PC-9 (cell line): ENCODE measurements at regions of chr3 and their contacts with region 1.

Region 1: DNA sequence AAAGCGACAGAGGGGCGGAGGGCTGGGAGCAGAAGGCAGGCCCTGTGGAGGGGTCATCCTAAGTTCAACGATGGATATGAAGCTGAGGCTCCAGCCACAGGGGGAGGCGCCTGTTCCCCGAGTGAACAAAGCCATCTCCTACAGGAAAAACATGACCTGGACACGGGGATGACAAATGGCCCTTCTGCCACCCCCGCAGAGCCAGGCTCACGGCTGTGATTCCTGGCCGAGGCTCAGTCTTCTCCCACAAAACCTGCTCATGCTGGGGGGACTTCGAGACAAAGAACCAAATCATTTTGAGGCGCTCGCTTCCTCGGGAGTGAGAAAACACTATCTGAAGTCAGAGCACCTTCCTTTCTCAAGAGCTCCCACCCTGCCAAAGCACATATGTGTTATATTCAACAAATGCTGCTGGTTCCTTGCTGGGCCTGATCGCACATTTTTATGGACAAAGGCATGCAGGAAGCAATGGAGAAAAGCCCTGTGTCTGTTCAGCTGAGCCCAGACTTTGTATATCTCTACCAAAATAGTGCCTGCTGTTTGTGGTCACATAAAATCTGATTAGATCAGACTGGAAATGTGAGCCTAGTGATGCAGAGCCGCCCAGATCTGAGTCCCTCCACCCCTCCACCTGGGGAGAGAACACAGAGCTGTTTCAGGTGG is 5.6 kb downstream of the RBP1 start:
- DNase-seq: peak; percentile 67 to 87
- H3K4me3 ChIP-seq: peak overlapping the region; percentile 30; the same call in 1 of the 2 replicates
- H3K27ac ChIP-seq: peak overlapping the region; percentile 94
- H3K4me1 ChIP-seq: peaks cover 64% of the 10 kb centered on the region
- H3K27me3 ChIP-seq: no peaks in the 10 kb centered on the region
- CTCF ChIP-seq: no peak

Region 2: GRCh38 chr3:139302084-139302800 is 231.7 kb before region 1 on chr3:
- CTCF ChIA-PET with region 1: no interaction called
- POLR2A ChIA-PET with region 1: no interaction called
- intact Hi-C with region 1: loop called (anchors 2 kb)
- DNase-seq: peak; percentile 91 to 97
- H3K4me3 ChIP-seq: peak overlapping the region; percentile 22; the same call in 1 of the 2 replicates
- H3K27ac ChIP-seq: peak overlapping the region; percentile 71
- H3K4me1 ChIP-seq: peaks cover 52% of the 10 kb centered on the region
- H3K27me3 ChIP-seq: no peaks in the 10 kb centered on the region
- CTCF ChIP-seq: no peak

Region 3: GRCh38 chr3:139473155-139473771 is 60.6 kb before region 1 on chr3:
- CTCF ChIA-PET with region 1: no interaction called
- POLR2A ChIA-PET with region 1: no interaction called
- intact Hi-C with region 1: loop called (anchors 10 kb)
- DNase-seq: peak; percentile 43 to 87
- H3K4me3 ChIP-seq: no peak overlapping the region
- H3K27ac ChIP-seq: peak overlapping the region; percentile 85
- H3K4me1 ChIP-seq: peaks cover 43% of the 10 kb centered on the region
- H3K27me3 ChIP-seq: no peaks in the 10 kb centered on the region
- CTCF ChIP-seq: no peak

Region 4: GRCh38 chr3:139574026-139574947 is 40.4 kb after region 1 on chr3:
- CTCF ChIA-PET with region 1: no interaction called
- POLR2A ChIA-PET with region 1: no interaction called
- intact Hi-C with region 1: no loop called
- DNase-seq: no peak
- H3K4me3 ChIP-seq: no peak overlapping the region
- H3K27ac ChIP-seq: no peak overlapping the region
- H3K4me1 ChIP-seq: no peaks in the 10 kb centered on the region
- H3K27me3 ChIP-seq: no peaks in the 10 kb centered on the region
- CTCF ChIP-seq: no peak

Region 5: GRCh38 chr3:139601191-139601961 is 67.5 kb after region 1 on chr3:
- CTCF ChIA-PET with region 1: no interaction called
- POLR2A ChIA-PET with region 1: no interaction called
- intact Hi-C with region 1: no loop called
- DNase-seq: peak in 1 of 2 experiments; percentile 70
- H3K4me3 ChIP-seq: no peak overlapping the region
- H3K27ac ChIP-seq: peak overlapping the region; percentile 42
- H3K4me1 ChIP-seq: peaks cover 26% of the 10 kb centered on the region
- H3K27me3 ChIP-seq: no peaks in the 10 kb centered on the region
- CTCF ChIP-seq: no peak

Region 6: GRCh38 chr3:140629357-140630139 is 1095.6 kb after region 1 on chr3:
- CTCF ChIA-PET with region 1: no interaction called
- POLR2A ChIA-PET with region 1: no interaction called
- intact Hi-C with region 1: loop called (anchors 10 kb)
- DNase-seq: peak; percentile 56 to 92
- H3K4me3 ChIP-seq: no peak overlapping the region
- H3K27ac ChIP-seq: peak overlapping the region; percentile 72
- H3K4me1 ChIP-seq: peaks cover 30% of the 10 kb centered on the region
- H3K27me3 ChIP-seq: no peaks in the 10 kb centered on the region
- CTCF ChIP-seq: no peak